CD4-positive, alpha-beta T cell (primary cell): ENCODE measurements at regions of chr2 and their contacts with region 1.

Region 1: GRCh38 chr2:168968342-168968741 is 62.8 kb downstream of the ABCB11 start:
- DNase-seq: no peak
- ATAC-seq: no peak
- H3K4me3 ChIP-seq: no peak overlapping the region
- H3K4me3 Mint-ChIP-seq: no peak overlapping the region
- H3K27ac ChIP-seq: no peak overlapping the region
- H3K27ac Mint-ChIP-seq: no peak overlapping the region
- H3K4me1 ChIP-seq: peaks cover 21% of the 10 kb centered on the region
- H3K4me1 Mint-ChIP-seq: peaks cover 28% of the 10 kb centered on the region
- H3K27me3 ChIP-seq: no peaks in the 10 kb centered on the region
- H3K27me3 Mint-ChIP-seq: no peaks in the 10 kb centered on the region
- CTCF ChIP-seq: no peak

Region 2: DNA sequence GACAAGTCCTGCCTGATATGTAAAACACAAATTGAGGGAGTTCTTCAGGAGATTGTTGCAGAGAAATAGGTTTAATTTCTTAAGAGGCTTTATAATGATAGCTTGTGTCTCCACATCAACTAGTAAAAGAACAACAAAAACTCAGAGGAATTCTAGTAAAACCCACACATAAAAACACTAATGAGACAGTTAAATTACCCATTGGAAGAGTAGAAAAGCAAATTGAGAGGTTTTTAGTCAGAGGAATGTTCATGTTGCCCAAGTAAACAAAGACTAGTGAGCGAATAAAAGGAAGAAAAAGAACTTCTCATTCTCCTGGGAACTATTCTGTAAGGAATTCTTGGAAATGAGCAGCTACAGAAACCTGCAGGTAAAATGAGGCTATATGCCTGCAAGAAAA is 1051.6 kb before region 1 on chr2:
- CTCF ChIA-PET with region 1: no interaction called
- POLR2A ChIA-PET with region 1: no interaction called
- intact Hi-C with region 1: no loop called
- DNase-seq: no peak
- ATAC-seq: no peak
- H3K4me3 ChIP-seq: no peak overlapping the region
- H3K4me3 Mint-ChIP-seq: no peak overlapping the region
- H3K27ac ChIP-seq: no peak overlapping the region
- H3K27ac Mint-ChIP-seq: no peak overlapping the region
- H3K4me1 ChIP-seq: no peaks in the 10 kb centered on the region
- H3K4me1 Mint-ChIP-seq: no peaks in the 10 kb centered on the region
- H3K27me3 ChIP-seq: peaks cover 0 to 6% of the 10 kb centered on the region in 2 experiments
- H3K27me3 Mint-ChIP-seq: peaks cover 13% of the 10 kb centered on the region
- CTCF ChIP-seq: no peak

Region 3: GRCh38 chr2:168816369-168816768 is 152.0 kb before region 1 on chr2:
- CTCF ChIA-PET with region 1: no interaction called
- POLR2A ChIA-PET with region 1: no interaction called
- intact Hi-C with region 1: no loop called
- DNase-seq: no peak
- ATAC-seq: no peak
- H3K4me3 ChIP-seq: no peak overlapping the region
- H3K4me3 Mint-ChIP-seq: no peak overlapping the region
- H3K27ac ChIP-seq: no peak overlapping the region
- H3K27ac Mint-ChIP-seq: no peak overlapping the region
- H3K4me1 ChIP-seq: no peaks in the 10 kb centered on the region
- H3K4me1 Mint-ChIP-seq: no peaks in the 10 kb centered on the region
- H3K27me3 ChIP-seq: no peaks in the 10 kb centered on the region
- H3K27me3 Mint-ChIP-seq: no peaks in the 10 kb centered on the region
- CTCF ChIP-seq: no peak

Region 4: DNA sequence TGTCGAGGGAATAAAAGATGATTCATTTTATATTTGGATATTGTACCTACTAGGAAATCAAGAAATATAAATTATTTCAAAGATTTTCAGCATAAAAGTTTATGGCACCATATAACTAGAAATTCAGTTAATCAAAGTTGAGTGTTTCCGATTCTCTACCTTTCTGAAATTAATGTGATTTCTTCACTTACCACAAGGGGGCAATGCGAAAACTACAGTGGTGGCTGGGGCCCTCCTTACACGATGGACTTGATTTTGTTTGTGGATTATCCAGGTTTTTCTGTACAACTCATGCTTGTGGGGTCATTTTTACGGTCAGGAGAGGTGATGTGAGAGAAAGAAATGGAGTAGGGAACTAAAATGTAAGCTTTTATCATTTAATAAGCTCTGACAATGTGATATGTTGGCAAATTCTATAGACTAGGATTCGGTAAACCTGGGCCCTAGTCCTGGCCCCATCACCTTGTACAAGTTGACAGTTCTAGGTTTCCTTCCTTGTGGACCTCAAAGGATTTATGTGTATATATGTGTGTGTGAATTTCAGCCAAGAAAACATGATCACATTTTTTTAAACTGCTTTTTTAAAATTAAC is 19.6 kb before region 1 on chr2:
- CTCF ChIA-PET with region 1: no interaction called
- POLR2A ChIA-PET with region 1: no interaction called
- intact Hi-C with region 1: no loop called
- DNase-seq: peak in 3 of 14 experiments; percentile 12 to 36 (median 29)
- ATAC-seq: no peak
- H3K4me3 ChIP-seq: no peak overlapping the region
- H3K4me3 Mint-ChIP-seq: no peak overlapping the region
- H3K27ac ChIP-seq: no peak overlapping the region
- H3K27ac Mint-ChIP-seq: no peak overlapping the region
- H3K4me1 ChIP-seq: no peaks in the 10 kb centered on the region
- H3K4me1 Mint-ChIP-seq: no peaks in the 10 kb centered on the region
- H3K27me3 ChIP-seq: no peaks in the 10 kb centered on the region
- H3K27me3 Mint-ChIP-seq: no peaks in the 10 kb centered on the region
- CTCF ChIP-seq: peak; percentile 66

Region 5: DNA sequence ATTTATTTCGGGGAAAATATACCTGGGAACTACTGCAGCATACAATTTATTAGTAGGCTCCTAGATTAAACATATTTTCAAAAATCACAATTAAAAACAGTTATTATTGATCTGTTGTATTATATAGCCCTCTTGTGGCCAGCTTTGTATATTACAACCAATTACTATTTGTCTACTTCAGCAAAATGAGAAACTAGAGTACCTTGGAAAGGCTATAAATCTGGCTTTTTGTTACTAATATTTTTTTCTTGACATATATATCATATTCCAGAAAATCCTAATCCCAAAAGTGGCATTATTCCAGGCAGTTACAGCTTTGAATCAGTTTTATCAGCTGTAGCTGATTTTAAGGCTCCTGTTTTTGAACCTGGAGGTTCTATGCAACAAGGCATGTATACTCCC is 960.1 kb after region 1 on chr2:
- CTCF ChIA-PET with region 1: no interaction called
- POLR2A ChIA-PET with region 1: no interaction called
- intact Hi-C with region 1: loop called in 1 of 2 experiments (anchors 5 kb)
- DNase-seq: peak in 3 of 14 experiments; percentile 58 to 61 (median 60)
- ATAC-seq: peak; percentile 37
- H3K4me3 ChIP-seq: no peak overlapping the region
- H3K4me3 Mint-ChIP-seq: no peak overlapping the region
- H3K27ac ChIP-seq: no peak overlapping the region
- H3K27ac Mint-ChIP-seq: no peak overlapping the region
- H3K4me1 ChIP-seq: no peaks in the 10 kb centered on the region
- H3K4me1 Mint-ChIP-seq: no peaks in the 10 kb centered on the region
- H3K27me3 ChIP-seq: no peaks in the 10 kb centered on the region
- H3K27me3 Mint-ChIP-seq: no peaks in the 10 kb centered on the region
- CTCF ChIP-seq: peak; percentile 92